Posterior vena cava (tissue), 2 donors: ENCODE measurements at regions of chr16 and their contacts with region 1.

Region 1: GRCh38 chr16:51129105-51129504 is 22.0 kb downstream of the SALL1 start:
- DNase-seq: no peak

Region 2: GRCh38 chr16:51095890-51096626 is 33.0 kb before region 1 on chr16:
- intact Hi-C with region 1: loop called in 1 of 2 experiments (anchors 1 kb)
- DNase-seq: no peak

Region 3: GRCh38 chr16:51607201-51607646 is 478.1 kb after region 1 on chr16:
- intact Hi-C with region 1: no loop called
- DNase-seq: no peak